ENCODE measurements at regions of chr1 and their contacts with region 1.

Region 1: GRCh38 chr1:43554444-43554992 is 23.8 kb downstream of the PTPRF start:
- DNase-seq: no peak
- H3K4me3 ChIP-seq: no peak overlapping the region
- CTCF ChIP-seq: peak; percentile 67

Region 2: GRCh38 chr1:43537423-43538159 is 16.9 kb before region 1 on chr1:
- CTCF ChIA-PET with region 1: interaction called, 11 read pairs
- POLR2A ChIA-PET with region 1: no interaction called
- DNase-seq: no peak
- H3K4me3 ChIP-seq: no peak overlapping the region
- CTCF ChIP-seq: no peak

Region 3: DNA sequence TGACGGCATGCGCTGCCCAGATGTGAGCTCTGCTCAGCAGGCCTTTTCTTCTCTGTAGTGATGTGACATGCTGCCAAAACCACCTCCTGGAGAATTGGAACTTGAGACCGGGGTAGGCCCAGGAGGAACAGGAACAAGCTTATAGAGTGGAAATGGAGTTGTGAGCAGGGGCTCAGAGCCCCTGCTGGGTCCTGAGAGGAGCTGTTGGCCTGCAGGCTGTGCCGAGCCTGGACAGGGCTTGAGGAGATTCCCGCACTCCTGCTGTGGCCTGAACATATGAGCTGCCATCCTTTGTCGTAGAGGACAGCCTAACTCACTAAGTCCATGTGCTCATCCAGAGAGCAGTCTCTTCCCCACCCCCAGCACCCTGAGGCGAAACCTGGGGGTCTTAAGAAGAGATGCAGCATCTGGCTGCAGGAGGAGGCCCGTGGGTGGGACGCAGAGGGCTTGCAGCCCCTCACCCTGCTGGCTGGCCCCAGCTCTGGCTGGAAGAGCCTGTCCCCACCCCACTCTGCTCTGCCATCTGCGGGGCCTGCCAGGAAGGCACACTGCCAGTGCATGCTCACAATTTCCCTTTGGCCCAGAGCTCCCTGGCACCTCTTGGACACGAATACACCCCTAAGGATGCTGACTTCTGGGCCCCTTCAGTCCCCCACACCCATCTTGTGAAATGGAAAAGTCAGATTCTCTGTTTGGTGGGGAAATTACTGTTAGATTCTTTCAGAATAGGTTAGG is 18.7 kb after region 1 on chr1:
- CTCF ChIA-PET with region 1: interaction called, 51 read pairs
- POLR2A ChIA-PET with region 1: no interaction called
- DNase-seq: no peak
- H3K4me3 ChIP-seq: no peak overlapping the region
- CTCF ChIP-seq: no peak

Region 4: GRCh38 chr1:43704838-43705237 is 150.3 kb after region 1 on chr1:
- CTCF ChIA-PET with region 1: no interaction called
- POLR2A ChIA-PET with region 1: no interaction called
- DNase-seq: no peak
- H3K4me3 ChIP-seq: no peak overlapping the region
- CTCF ChIP-seq: peak; percentile 5